MCF 10A (cell line): ENCODE measurements at regions of chr22 and their contacts with region 1.

Region 1: DNA sequence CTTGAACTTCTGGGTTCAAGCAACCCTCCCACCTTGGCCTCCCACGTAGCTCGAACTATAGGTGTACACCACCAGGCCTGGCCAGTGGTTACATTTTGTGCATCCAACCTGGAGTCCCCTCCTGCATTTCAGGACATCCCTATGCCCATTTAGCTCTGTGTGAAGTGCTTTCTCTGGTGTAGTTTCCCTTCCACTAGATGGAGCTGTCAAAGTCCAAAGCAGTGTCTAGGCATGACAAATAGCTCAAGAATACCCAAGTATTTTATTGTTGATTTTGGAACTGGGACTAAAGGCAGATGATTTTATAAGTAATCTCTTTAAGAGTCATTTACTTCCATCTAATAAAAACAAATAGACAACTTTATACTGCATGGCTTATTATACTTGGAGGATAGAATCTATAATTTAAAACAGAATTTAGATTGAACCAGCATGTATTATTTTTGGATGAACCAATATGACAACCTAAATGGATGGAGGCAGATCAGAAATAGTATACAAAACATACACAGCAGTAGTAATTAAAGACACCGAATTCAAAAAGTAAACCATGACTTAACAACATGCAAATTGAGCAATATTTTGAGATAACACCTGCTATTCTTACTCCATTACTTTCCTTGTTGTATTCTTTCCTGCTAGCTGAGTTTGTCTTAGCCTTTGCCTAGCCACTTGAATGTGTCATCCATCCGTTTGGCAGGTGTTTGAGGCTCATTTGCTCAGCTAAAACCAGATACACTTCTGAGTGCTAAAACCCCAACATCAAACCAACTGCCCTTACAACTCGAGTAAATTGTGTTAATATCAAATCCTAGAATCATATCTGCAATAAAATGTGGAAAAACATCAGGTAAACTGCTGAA is 37.7 kb downstream of the EIF4ENIF1 start:
- DNase-seq: peak; percentile 60
- H3K4me3 Mint-ChIP-seq: no peak overlapping the region
- H3K27ac Mint-ChIP-seq: no peak overlapping the region
- H3K4me1 Mint-ChIP-seq: peaks cover 7% of the 10 kb centered on the region
- H3K27me3 Mint-ChIP-seq: no peaks in the 10 kb centered on the region
- CTCF ChIP-seq: peak; percentile 38

Region 2: GRCh38 chr22:31436132-31436531 is 15.8 kb before region 1 on chr22:
- CTCF ChIA-PET with region 1: interaction called, 17 read pairs
- POLR2A ChIA-PET with region 1: interaction called, 3 read pairs
- intact Hi-C with region 1: no loop called
- DNase-seq: no peak
- H3K4me3 Mint-ChIP-seq: no peak overlapping the region
- H3K27ac Mint-ChIP-seq: no peak overlapping the region
- H3K4me1 Mint-ChIP-seq: no peaks in the 10 kb centered on the region
- H3K27me3 Mint-ChIP-seq: no peaks in the 10 kb centered on the region
- CTCF ChIP-seq: no peak

Region 3: GRCh38 chr22:31465307-31465706 is 13.4 kb after region 1 on chr22:
- CTCF ChIA-PET with region 1: interaction called, 12 read pairs
- POLR2A ChIA-PET with region 1: no interaction called
- intact Hi-C with region 1: no loop called
- DNase-seq: no peak
- H3K4me3 Mint-ChIP-seq: no peak overlapping the region
- H3K27ac Mint-ChIP-seq: no peak overlapping the region
- H3K4me1 Mint-ChIP-seq: no peaks in the 10 kb centered on the region
- H3K27me3 Mint-ChIP-seq: no peaks in the 10 kb centered on the region
- CTCF ChIP-seq: no peak

Region 4: DNA sequence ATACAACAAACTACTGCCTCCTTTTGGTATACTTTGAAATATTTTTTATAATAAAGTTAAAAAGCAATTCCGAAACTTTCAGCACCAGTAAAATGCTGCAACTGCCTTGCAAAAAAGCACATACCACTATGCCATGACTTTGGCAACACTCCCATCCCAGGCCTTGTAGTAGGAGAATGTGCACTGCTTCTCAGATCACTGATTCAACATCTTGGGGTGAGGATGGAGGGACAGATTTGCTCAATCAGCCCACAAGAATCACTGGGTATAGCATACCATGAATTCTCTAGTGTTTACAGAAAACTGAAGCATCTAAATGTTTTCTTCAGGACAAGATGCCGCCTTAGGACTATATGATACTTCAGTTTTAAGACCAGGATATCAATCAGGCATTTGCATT is 22.8 kb after region 1 on chr22:
- CTCF ChIA-PET with region 1: interaction called, 11 read pairs
- POLR2A ChIA-PET with region 1: interaction called, 4 read pairs
- intact Hi-C with region 1: no loop called
- DNase-seq: no peak
- H3K4me3 Mint-ChIP-seq: no peak overlapping the region
- H3K27ac Mint-ChIP-seq: no peak overlapping the region
- H3K4me1 Mint-ChIP-seq: no peaks in the 10 kb centered on the region
- H3K27me3 Mint-ChIP-seq: no peaks in the 10 kb centered on the region
- CTCF ChIP-seq: no peak

Region 5: GRCh38 chr22:31630331-31631329 is 178.7 kb after region 1 on chr22:
- CTCF ChIA-PET with region 1: interaction called, 4 read pairs
- POLR2A ChIA-PET with region 1: no interaction called
- intact Hi-C with region 1: loop called (anchors 2 kb)
- DNase-seq: peak; percentile 70
- H3K4me3 Mint-ChIP-seq: peak overlapping the region; percentile 75
- H3K27ac Mint-ChIP-seq: no peak overlapping the region
- H3K4me1 Mint-ChIP-seq: peaks cover 19% of the 10 kb centered on the region
- H3K27me3 Mint-ChIP-seq: no peaks in the 10 kb centered on the region
- CTCF ChIP-seq: no peak

Region 6: GRCh38 chr22:31734512-31734911 is 282.6 kb after region 1 on chr22:
- CTCF ChIA-PET with region 1: no interaction called
- POLR2A ChIA-PET with region 1: no interaction called
- intact Hi-C with region 1: no loop called
- DNase-seq: peak; percentile 54
- H3K4me3 Mint-ChIP-seq: no peak overlapping the region
- H3K27ac Mint-ChIP-seq: peak overlapping the region; percentile 70
- H3K4me1 Mint-ChIP-seq: peaks cover 17% of the 10 kb centered on the region
- H3K27me3 Mint-ChIP-seq: no peaks in the 10 kb centered on the region
- CTCF ChIP-seq: no peak